OCI-LY7 (cell line): ENCODE measurements at regions of chr9 and their contacts with region 1.

Region 1: GRCh38 chr9:129080602-129081387 is at the start of gene DOLPP1:
- DNase-seq: peak; percentile 99
- H3K4me3 ChIP-seq: peak within 1 kb of the TSS; percentile 81
- H3K27ac ChIP-seq: peak within 1 kb of the TSS; percentile 43
- H3K4me1 ChIP-seq: peaks cover 16% of the 10 kb centered on the region
- CTCF ChIP-seq: no peak
- total RNA-seq, gene DOLPP1: 15.1 and 16.9 TPM in 2 replicates

Region 2: GRCh38 chr9:129110740-129111527 is 30.1 kb after region 1 on chr9 and contains the starts of genes CRAT and PTPA:
- CTCF ChIA-PET with region 1: no interaction called
- POLR2A ChIA-PET with region 1: interaction called, 6 read pairs
- intact Hi-C with region 1: loop called (anchors 2 kb)
- DNase-seq: peak; percentile 94
- H3K4me3 ChIP-seq: peak within 1 kb of the TSS; percentile 89
- H3K27ac ChIP-seq: peak within 1 kb of the TSS; percentile 90
- H3K4me1 ChIP-seq: peaks cover 34% of the 10 kb centered on the region
- CTCF ChIP-seq: no peak
- total RNA-seq, gene CRAT: 0.26 and 1.8 TPM in 2 replicates
- total RNA-seq, gene PTPA: 106 and 109 TPM in 2 replicates

Region 3: DNA sequence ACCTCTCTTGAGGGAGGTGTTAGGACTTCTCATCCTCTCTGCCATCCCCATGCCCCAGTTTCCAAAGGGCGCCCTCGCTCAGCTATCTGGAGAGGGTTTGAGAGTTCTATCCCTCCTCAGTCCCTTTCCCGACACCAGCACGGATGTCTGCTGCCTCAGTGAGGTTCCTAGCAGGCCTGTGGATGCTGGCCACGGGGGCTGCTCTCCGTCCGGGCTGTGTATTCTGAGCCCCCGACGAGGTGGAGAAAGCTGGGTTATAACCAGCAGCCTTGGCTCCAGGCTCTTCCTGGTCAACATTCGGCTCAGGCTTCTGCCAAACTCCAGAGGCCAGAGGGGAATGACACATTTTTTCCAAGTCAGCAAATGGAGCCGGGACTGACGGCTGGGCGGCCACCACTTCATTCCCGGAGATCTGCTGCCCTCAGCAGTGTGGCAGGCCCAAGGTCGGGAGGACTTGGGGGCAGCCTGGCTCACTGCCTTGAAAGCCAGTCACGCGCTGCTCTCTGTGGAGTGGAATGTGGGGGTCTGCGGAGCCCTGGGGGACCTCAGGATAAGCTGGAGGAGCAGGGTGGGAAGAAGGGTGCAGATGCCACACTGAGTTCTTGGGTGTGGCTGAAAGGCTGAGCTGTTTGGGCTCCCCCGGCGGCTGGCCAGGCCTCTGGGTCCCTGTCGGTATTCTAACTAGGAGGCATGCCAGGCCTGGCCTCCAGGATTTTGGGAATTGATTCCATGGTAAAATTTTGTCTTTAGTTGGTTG is 57.9 kb after region 1 on chr9:
- CTCF ChIA-PET with region 1: no interaction called
- POLR2A ChIA-PET with region 1: no interaction called
- intact Hi-C with region 1: no loop called
- DNase-seq: peak; percentile 18
- H3K4me3 ChIP-seq: no peak overlapping the region
- H3K27ac ChIP-seq: peak overlapping the region; percentile 91
- H3K4me1 ChIP-seq: peaks cover 48% of the 10 kb centered on the region
- CTCF ChIP-seq: no peak